Activated naive CD8-positive, alpha-beta T cell treated with anti-CD3 and anti-CD28 coated beads, Interleukin-2, amount 10 ng/mL, durations not matched to agents 7 days and 5 days (primary cell): ENCODE measurements at regions of chr15 and their contacts with region 1.

Region 1: GRCh38 chr15:75639709-75640482 is at the start of gene IMP3:
- DNase-seq: peak; percentile 92
- ATAC-seq: peak; percentile 92
- H3K4me3 Mint-ChIP-seq: peak within 1 kb of the TSS; percentile 93
- H3K27ac Mint-ChIP-seq: peak within 1 kb of the TSS; percentile 86
- H3K4me1 Mint-ChIP-seq: peaks cover 29% of the 10 kb centered on the region
- H3K27me3 Mint-ChIP-seq: peaks cover 2% of the 10 kb centered on the region
- total RNA-seq, gene IMP3: 85.3 to 87.1 TPM

Region 2: GRCh38 chr15:75367913-75368688 is 271.8 kb before region 1 on chr15 and contains the start of gene MAN2C1:
- POLR2A ChIA-PET with region 1: interaction called, 42 read pairs
- DNase-seq: peak; percentile 94
- ATAC-seq: peak; percentile 91
- H3K4me3 Mint-ChIP-seq: peak within 1 kb of the TSS; percentile 89
- H3K27ac Mint-ChIP-seq: peak within 1 kb of the TSS; percentile 91
- H3K4me1 Mint-ChIP-seq: peaks cover 22% of the 10 kb centered on the region
- H3K27me3 Mint-ChIP-seq: no peaks in the 10 kb centered on the region
- total RNA-seq, gene MAN2C1: 232 to 235 TPM

Region 3: GRCh38 chr15:75508840-75509532 is 130.9 kb before region 1 on chr15:
- POLR2A ChIA-PET with region 1: interaction called, 10 read pairs
- DNase-seq: no peak
- ATAC-seq: no peak
- H3K4me3 Mint-ChIP-seq: no peak overlapping the region
- H3K27ac Mint-ChIP-seq: no peak overlapping the region
- H3K4me1 Mint-ChIP-seq: peaks cover 4% of the 10 kb centered on the region
- H3K27me3 Mint-ChIP-seq: no peaks in the 10 kb centered on the region

Region 4: DNA sequence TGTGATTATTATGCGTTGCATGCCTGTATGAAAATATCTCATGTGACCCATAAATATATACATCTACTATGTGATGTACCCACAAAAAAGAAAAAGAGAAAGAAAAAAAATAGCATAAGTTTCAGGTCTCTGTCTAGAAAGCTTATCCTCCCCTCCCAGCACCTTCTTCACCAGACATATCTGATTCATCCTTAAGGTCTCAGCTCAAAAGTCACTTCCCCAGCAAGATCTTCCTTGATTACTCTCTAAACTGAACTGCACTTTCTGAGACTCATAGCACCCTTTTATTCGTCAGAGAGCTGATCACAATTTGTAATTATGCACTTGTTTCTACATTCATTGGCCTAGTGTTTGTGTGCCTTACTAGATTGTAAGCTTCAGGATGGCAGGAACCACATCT is 49.7 kb before region 1 on chr15:
- POLR2A ChIA-PET with region 1: interaction called, 49 read pairs
- DNase-seq: no peak
- ATAC-seq: no peak
- H3K4me3 Mint-ChIP-seq: no peak overlapping the region
- H3K27ac Mint-ChIP-seq: peak overlapping the region; percentile 10
- H3K4me1 Mint-ChIP-seq: peaks cover 8% of the 10 kb centered on the region
- H3K27me3 Mint-ChIP-seq: no peaks in the 10 kb centered on the region

Region 5: GRCh38 chr15:75606711-75607699 is 32.9 kb before region 1 on chr15:
- POLR2A ChIA-PET with region 1: interaction called, 47 read pairs
- DNase-seq: peak; percentile 54
- ATAC-seq: peak; percentile 90
- H3K4me3 Mint-ChIP-seq: peak overlapping the region; percentile 84
- H3K27ac Mint-ChIP-seq: peak overlapping the region; percentile 98
- H3K4me1 Mint-ChIP-seq: peaks cover 42% of the 10 kb centered on the region
- H3K27me3 Mint-ChIP-seq: no peaks in the 10 kb centered on the region

Region 6: DNA sequence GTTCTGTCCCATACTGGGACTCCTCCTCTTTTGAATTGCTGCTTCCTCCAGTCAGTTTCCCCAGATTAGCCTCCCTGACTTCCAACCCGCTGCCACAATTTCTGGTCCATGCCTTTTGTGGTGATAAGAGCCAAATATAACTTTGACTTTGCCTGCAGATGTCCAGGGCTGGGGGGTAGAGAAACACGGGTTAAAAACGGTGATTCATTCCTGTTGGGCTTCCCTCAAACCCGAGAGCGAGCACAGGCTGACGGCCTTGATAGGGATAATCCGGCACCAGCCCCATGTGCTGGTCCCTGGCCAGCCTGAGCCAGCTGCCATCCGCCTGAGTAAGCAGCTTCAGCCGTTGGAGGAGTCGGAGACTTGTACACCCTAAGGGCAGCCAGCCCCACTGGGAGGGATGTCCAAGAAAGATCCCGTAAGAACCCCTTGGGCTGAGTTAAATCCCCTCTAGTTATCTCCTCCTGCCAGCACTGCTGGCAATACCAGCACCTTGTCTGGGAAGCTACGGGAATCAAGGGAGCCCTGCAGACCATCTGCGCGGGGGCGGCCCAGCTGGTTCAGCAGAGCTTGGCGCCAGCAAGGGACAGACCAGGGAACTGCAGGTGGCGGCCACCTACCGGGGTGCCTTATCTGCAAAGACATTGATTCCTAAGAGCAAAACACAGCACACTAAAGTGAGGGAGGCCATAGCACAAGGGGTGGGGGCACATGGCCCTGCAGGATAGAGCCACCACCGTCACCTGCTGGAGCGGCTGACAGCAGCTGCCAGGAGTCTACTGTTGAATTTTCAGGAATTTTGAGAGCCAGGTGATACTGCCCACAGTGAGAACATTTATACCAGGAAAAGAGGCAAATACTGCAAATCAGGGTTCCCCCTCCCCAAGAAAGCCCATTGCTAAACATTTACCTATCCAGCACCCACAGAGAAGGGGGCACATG is 54.6 kb after region 1 on chr15:
- POLR2A ChIA-PET with region 1: no interaction called
- DNase-seq: no peak
- ATAC-seq: no peak
- H3K4me3 Mint-ChIP-seq: no peak overlapping the region
- H3K27ac Mint-ChIP-seq: no peak overlapping the region
- H3K4me1 Mint-ChIP-seq: peaks cover 18% of the 10 kb centered on the region
- H3K27me3 Mint-ChIP-seq: peaks cover 9% of the 10 kb centered on the region